AG04449 (cell line): ENCODE measurements at regions of chr4 and their contacts with region 1.

Region 1: DNA sequence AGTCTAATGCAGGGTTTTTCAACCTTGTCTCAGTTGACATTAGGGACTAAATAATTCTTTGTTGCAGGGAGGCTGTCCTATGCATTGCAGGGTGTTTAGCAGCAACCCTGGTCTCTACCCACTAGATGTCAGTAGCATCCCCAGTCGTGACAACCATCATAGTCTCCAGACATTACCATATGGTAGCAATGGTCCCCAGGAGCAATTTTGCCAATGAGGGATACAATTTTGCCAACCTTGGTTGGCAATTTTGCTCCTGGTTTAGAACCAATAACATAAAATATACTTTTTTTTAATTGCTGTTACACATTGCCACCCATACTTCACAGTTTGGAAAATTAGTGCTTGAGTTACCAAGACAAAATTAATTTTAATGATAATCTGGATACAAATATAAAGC is 6.0 kb downstream of the EREG start:
- DNase-seq: no peak
- H3K4me3 ChIP-seq: no peak overlapping the region
- CTCF ChIP-seq: peak; percentile 79

Region 2: GRCh38 chr4:74267998-74268606 is 102.8 kb before region 1 on chr4:
- CTCF ChIA-PET with region 1: no interaction called
- POLR2A ChIA-PET with region 1: no interaction called
- DNase-seq: peak; percentile 36
- H3K4me3 ChIP-seq: no peak overlapping the region
- CTCF ChIP-seq: no peak

Region 3: DNA sequence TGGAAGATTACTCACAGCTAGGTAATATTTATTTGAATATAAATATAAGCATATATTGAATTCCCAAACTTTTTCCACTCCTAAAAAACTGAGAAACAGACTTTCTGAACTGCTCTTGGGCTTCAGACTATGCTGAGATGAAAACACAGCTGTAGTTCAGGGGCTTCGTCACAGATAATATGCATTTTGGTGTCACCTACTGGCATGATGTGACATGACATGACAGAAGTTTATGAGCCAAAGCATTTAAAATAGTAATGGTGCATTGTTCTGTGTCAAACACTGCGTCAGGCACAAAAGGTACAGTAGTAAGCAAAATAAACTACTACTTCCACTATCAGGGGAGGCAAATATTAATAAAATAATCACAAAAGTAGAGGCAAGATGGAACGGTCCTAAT is 252.1 kb after region 1 on chr4:
- CTCF ChIA-PET with region 1: interaction called, 32 read pairs
- POLR2A ChIA-PET with region 1: no interaction called
- DNase-seq: no peak
- H3K4me3 ChIP-seq: no peak overlapping the region
- CTCF ChIP-seq: no peak

Region 4: GRCh38 chr4:74682567-74683359 is 311.9 kb after region 1 on chr4:
- CTCF ChIA-PET with region 1: interaction called, 142 read pairs
- POLR2A ChIA-PET with region 1: no interaction called
- DNase-seq: peak; percentile 72
- H3K4me3 ChIP-seq: no peak overlapping the region
- CTCF ChIP-seq: no peak

Region 5: GRCh38 chr4:74858929-74859562 is 488.1 kb after region 1 on chr4:
- CTCF ChIA-PET with region 1: no interaction called
- POLR2A ChIA-PET with region 1: no interaction called
- DNase-seq: no peak
- H3K4me3 ChIP-seq: no peak overlapping the region
- CTCF ChIP-seq: no peak